ENCODE measurements at regions of chr4 and their contacts with region 1.

Region 1: DNA sequence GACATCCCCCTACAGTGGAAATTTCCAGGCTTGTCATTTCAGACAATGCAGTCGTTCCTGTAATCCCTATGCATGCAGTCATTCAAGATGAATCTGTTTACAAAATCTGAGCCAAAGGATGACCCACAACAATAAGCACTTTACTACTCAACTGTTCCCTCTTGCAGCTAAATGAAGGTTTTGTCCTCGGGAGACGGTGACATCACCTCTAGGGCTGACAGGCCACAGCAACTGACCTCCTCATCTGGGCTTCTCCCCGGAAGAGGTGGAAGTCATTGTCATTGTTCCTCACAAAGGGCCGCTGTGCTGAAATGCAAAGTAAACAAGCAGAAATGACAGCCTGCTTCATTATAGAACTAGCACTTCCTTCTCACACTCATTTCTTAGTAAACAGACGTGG is 29.2 kb downstream of the CLRN2 start:
- DNase-seq: no peak
- H3K4me3 Mint-ChIP-seq: no peak overlapping the region
- H3K27ac Mint-ChIP-seq: no peak overlapping the region
- H3K4me1 Mint-ChIP-seq: peaks cover 3% of the 10 kb centered on the region
- H3K27me3 Mint-ChIP-seq: peaks cover 12% of the 10 kb centered on the region

Region 2: DNA sequence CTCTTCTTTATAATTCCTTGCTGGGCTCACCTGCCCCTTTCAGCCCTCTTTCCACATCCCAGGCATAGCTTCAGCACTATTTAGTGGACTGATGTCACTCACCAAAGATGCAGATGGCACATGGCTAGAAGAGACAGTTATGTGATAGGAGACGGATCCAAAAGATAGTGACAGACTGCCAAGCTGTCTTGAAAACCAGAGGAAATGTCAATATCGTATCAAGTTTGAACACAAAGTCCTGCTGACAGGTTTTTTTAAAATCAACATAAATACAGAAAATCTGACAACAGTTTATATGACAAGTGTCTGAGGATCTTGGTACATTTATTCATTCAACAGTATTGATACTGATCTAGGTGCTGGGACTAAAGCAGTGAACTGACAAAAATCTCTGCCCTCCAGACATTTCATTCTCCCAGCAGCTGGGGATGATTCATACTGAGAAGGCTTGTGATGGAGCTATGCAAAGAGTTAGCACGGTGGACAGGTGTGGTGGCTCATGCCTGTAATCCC is 14.7 kb before region 1 on chr4:
- intact Hi-C with region 1: no loop called
- DNase-seq: no peak
- H3K4me3 Mint-ChIP-seq: no peak overlapping the region
- H3K27ac Mint-ChIP-seq: no peak overlapping the region
- H3K4me1 Mint-ChIP-seq: no peaks in the 10 kb centered on the region
- H3K27me3 Mint-ChIP-seq: peaks cover 15% of the 10 kb centered on the region

Region 3: GRCh38 chr4:17636696-17637622 is 92.8 kb after region 1 on chr4:
- intact Hi-C with region 1: loop called (anchors 1 kb)
- DNase-seq: peak; percentile 91
- H3K4me3 Mint-ChIP-seq: no peak overlapping the region
- H3K27ac Mint-ChIP-seq: no peak overlapping the region
- H3K4me1 Mint-ChIP-seq: no peaks in the 10 kb centered on the region
- H3K27me3 Mint-ChIP-seq: no peaks in the 10 kb centered on the region

Region 4: DNA sequence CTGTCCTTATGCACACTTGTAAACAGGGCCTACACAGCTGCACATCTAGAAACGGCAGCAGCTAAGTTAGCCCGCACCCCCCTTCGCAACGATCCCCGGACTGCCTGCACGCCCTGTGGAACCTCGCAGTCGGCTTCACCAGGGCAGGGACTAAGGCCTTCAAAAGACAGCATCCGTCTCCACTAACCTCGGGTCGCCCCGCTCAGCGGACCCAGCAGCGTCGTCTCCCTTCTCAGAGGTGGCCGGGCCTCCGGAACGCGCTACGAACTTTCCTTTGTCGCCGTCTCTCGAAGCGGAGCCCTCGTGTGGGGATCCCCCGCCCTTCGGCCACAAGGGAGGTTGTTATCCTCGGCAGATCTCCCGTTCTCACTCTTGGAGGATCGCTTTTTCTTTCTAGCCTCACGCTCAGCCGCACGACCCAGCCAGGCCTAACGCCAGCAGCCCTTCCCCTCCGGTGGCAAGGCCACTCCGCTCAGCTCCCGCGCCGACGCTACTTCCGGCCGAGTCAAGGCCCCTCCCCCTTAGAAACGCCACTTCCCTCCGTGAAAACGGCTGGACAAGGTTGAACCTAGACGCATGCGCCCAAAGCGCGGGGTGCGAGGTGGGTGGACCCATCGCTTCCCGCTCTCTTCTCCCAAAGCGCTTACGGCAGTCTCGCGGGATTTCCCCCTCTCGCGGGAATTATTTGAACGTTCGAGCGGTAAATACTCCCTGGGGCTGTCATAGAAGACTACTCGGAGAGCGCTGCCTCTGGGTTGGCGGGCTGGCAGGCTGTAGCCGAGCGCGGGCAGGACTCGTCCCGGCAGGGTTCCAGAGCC is 266.3 kb after region 1 on chr4 and contains the starts of genes DCAF16 and NCAPG:
- intact Hi-C with region 1: loop called (anchors 1 kb)
- DNase-seq: peak; percentile 100
- H3K4me3 Mint-ChIP-seq: peak within 1 kb of the TSS; percentile 97
- H3K27ac Mint-ChIP-seq: peak within 1 kb of the TSS; percentile 99
- H3K4me1 Mint-ChIP-seq: peaks cover 49% of the 10 kb centered on the region
- H3K27me3 Mint-ChIP-seq: peaks cover 2% of the 10 kb centered on the region
- total RNA-seq, gene DCAF16: 47.1 and 51.4 TPM in 2 replicates
- total RNA-seq, gene NCAPG: 46.3 and 53.4 TPM in 2 replicates